Psoas muscle (tissue), 8 donors: ENCODE measurements at regions of chr2 and their contacts with region 1.

Region 1: DNA sequence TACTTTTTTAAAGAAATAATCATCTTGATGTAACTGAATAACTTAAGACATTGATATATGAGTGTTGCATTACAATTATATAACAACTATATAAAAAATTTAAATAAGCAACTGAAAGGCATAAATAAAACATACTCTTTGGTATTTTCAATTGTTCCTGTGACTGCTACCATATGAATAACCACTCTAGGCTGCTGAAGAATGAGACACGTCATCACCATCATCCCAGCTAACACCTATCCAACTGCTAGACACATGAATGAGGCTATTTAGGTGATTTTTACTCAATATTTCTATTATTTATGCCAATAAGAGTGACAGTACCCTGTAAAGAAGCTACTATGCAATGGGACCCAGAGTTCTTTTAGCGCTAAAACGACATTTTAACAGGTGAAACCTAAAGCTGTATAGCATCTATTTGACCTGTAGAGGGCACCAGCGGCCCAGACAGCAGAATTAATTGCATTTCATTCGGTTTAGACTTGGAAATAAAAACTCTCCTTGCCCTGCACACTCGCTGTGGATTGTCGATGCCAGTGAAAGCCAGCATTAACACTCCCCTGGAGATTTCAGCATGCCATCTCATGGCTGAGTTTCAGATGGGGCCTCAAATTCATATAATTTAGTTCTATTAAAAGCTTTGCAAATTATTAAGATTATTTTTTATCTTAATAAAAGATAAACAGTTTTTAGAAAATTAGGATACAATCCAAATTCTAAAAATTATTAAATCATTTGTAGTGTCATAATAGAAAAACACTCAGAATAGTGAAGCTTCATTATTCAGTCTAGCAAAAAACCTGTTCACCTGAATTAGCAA is 89.4 kb upstream of the MAP2 start:
- DNase-seq: peak; percentile 25 to 52
- ATAC-seq: no peak
- H3K4me3 ChIP-seq: no peak overlapping the region
- H3K27ac ChIP-seq: no peak overlapping the region
- H3K4me1 ChIP-seq: peaks cover 4% of the 10 kb centered on the region
- H3K27me3 ChIP-seq: no peaks in the 10 kb centered on the region
- CTCF ChIP-seq: peak; percentile 77

Region 2: GRCh38 chr2:209556354-209556961 is 222.1 kb after region 1 on chr2:
- intact Hi-C with region 1: loop called in 1 of 2 experiments (anchors 10 kb)
- DNase-seq: no peak
- ATAC-seq: no peak
- H3K4me3 ChIP-seq: no peak overlapping the region
- H3K27ac ChIP-seq: no peak overlapping the region
- H3K4me1 ChIP-seq: no peaks in the 10 kb centered on the region
- H3K27me3 ChIP-seq: no peaks in the 10 kb centered on the region
- CTCF ChIP-seq: peak; percentile 31

Region 3: DNA sequence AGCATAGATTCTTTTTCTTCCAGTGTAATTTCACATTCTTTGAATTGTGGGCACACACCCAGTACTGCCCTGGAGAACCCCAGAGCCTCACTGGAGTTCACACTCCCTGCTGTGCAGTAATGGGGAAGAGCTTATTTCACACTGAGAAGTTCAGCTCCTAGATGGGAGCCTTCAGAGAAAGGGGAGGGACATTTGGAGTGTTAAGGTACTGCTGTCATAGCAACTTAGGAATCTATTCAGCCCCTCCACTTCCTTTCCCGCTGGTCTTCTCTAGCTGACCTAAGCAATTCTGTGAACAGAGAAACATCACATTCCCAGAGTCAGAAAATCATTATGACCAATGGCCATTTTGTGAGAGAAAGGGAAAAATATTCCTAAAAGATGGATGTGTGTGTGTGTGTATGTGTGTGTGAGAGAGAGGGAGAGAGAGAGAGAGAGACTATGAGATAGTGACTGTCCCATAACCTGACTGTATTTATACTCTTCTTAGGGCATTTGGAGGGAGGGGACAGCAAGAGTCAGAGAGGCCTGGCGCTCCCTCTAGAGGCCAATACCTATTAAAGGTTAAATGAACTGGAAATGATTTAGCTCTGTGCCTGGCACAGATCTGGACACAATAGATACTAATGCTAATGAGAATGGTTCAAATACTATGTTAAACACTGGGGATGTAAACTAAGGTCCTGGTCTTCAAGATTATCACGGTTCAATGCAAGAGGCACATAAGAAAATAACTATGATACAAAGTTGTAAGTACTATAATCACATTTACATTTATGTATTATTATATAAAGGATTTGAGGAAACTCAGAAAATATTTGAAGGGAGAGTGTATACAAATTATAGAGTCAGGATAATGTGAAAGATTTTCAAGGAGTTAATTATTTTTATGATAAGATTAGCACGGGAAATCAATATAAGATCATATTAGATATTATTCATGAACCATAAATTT is 626.5 kb after region 1 on chr2:
- intact Hi-C with region 1: loop called in 1 of 2 experiments (anchors 10 kb)
- DNase-seq: peak in 1 of 2 donors; percentile 23
- ATAC-seq: peak in 2 of 4 donors; percentile 58 to 60
- H3K4me3 ChIP-seq: no peak overlapping the region
- H3K27ac ChIP-seq: no peak overlapping the region
- H3K4me1 ChIP-seq: no peaks in the 10 kb centered on the region
- H3K27me3 ChIP-seq: no peaks in the 10 kb centered on the region
- CTCF ChIP-seq: peak; percentile 61